ENCODE measurements at regions of chr11 and their contacts with region 1.

Region 1: GRCh38 chr11:36289226-36289852 is at the start of gene COMMD9:
- DNase-seq: peak; percentile 97
- H3K4me3 Mint-ChIP-seq: peak within 1 kb of the TSS; percentile 88
- H3K27ac Mint-ChIP-seq: peak within 1 kb of the TSS; percentile 85
- H3K4me1 Mint-ChIP-seq: peaks cover 27% of the 10 kb centered on the region
- H3K27me3 Mint-ChIP-seq: peaks cover 4% of the 10 kb centered on the region

Region 2: DNA sequence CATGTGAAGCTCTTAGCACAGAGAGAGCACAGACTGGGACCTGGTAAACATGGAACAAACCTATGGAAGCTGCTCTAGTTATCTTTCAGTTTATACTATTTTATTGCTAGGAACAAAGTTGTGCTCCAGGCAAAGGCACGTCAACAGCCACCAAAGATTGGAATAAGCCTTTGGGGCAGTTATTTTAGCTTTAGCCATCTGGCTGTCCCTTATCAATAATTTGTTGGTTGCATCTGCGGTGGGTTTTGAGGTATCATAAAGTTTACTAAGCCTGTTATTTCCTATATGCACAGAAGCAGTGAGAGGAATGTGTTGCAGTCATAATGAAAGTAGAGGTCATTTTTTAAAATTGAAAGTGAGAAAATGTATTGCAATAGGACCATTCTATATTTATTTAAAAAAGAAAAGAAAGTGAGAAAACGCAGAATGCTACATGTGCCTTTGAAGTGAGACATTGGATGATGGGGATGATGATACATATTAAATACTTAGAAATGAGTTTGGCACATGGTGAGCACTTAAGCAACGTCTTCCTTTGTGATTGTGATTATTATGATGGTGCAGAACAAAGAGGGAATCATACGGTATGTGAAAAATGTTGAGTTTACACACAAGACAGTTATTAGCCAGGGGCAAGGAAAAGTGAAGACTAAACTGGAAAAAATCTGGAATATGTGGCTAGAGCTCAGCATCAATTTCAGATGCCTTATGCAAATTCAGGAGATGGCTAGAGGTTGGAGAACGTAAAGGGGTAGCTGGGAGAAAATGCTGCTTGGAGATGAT is 65.1 kb after region 1 on chr11:
- CTCF ChIA-PET with region 1: interaction called, 26 read pairs
- DNase-seq: no peak
- H3K4me3 Mint-ChIP-seq: no peak overlapping the region
- H3K27ac Mint-ChIP-seq: no peak overlapping the region
- H3K4me1 Mint-ChIP-seq: peaks cover 50% of the 10 kb centered on the region
- H3K27me3 Mint-ChIP-seq: peaks cover 15% of the 10 kb centered on the region

Region 3: GRCh38 chr11:36492724-36493304 is 203.5 kb after region 1 on chr11:
- CTCF ChIA-PET with region 1: interaction called, 152 read pairs
- DNase-seq: peak; percentile 48
- H3K4me3 Mint-ChIP-seq: no peak overlapping the region
- H3K27ac Mint-ChIP-seq: no peak overlapping the region
- H3K4me1 Mint-ChIP-seq: peaks cover 14% of the 10 kb centered on the region
- H3K27me3 Mint-ChIP-seq: no peaks in the 10 kb centered on the region

Region 4: GRCh38 chr11:36500315-36500721 is 211.0 kb after region 1 on chr11:
- CTCF ChIA-PET with region 1: interaction called, 16 read pairs
- DNase-seq: no peak
- H3K4me3 Mint-ChIP-seq: no peak overlapping the region
- H3K27ac Mint-ChIP-seq: no peak overlapping the region
- H3K4me1 Mint-ChIP-seq: peaks cover 16% of the 10 kb centered on the region
- H3K27me3 Mint-ChIP-seq: no peaks in the 10 kb centered on the region

Region 5: DNA sequence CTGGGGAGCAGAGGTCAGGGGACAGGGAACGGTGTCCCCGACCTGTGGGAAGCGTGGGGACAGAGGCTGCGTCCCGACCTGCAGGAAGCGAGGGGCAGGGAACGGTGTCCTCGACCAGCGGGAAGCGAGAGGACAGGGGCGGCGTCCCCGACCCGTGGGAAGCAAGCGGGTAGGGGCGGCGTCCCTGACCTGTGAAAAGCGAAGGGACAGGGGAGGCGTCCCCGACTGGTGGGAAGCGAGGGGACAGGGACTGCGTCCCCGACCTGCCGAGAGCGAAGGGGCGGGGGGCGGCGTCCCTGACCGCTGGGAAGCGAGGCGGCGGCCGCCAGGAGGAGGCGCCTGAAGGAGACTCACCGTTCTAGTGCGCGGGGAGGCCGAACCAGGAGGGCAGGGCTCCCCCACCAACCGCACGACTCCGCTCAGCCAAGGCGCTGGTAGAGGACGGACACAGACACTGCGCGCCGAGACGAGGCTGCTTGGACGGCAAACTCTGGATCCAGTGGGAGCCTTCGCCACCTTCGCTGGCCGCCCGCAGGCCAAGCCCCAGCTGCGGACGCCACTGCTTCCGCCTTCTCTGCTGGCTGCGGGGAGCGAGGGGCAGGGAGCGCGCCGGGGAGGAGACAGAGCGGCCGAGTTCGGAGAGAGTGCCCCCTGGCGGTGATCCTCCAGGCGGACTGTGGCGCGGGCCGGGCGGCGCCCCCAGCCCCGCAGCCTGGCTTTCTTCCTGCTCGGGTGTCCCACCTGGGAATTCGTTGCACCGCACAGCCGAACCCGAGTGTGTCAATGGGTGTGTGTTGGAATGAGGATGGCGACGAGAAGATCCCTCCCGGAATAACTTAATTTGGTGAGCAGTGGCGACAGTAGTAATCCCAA is 220.6 kb after region 1 on chr11 and contains the start of gene TRAF6:
- CTCF ChIA-PET with region 1: interaction called, 10 read pairs
- DNase-seq: peak; percentile 90
- H3K4me3 Mint-ChIP-seq: peak within 1 kb of the TSS; percentile 99
- H3K27ac Mint-ChIP-seq: peak within 1 kb of the TSS; percentile 92
- H3K4me1 Mint-ChIP-seq: peaks cover 30% of the 10 kb centered on the region
- H3K27me3 Mint-ChIP-seq: peaks cover 10% of the 10 kb centered on the region

Region 6: GRCh38 chr11:36564376-36565030 is 275.2 kb after region 1 on chr11:
- CTCF ChIA-PET with region 1: interaction called, 15 read pairs
- DNase-seq: peak; percentile 74
- H3K4me3 Mint-ChIP-seq: peak overlapping the region; percentile 29
- H3K27ac Mint-ChIP-seq: no peak overlapping the region
- H3K4me1 Mint-ChIP-seq: peaks cover 12% of the 10 kb centered on the region
- H3K27me3 Mint-ChIP-seq: peaks cover 53% of the 10 kb centered on the region